PC-3 (cell line): ENCODE measurements at regions of chr21 and their contacts with region 1.

Region 1: GRCh38 chr21:43718872-43719747 is at the start of gene PDXK:
- DNase-seq: peak; percentile 95
- ATAC-seq: peak; percentile 82
- H3K4me3 ChIP-seq: peak within 1 kb of the TSS; percentile 77
- H3K27ac ChIP-seq: peak within 1 kb of the TSS; percentile 71
- H3K4me1 ChIP-seq: peaks cover 30% of the 10 kb centered on the region
- H3K27me3 ChIP-seq: no peaks in the 10 kb centered on the region
- CTCF ChIP-seq: peak; percentile 47; the same call in 1 of the 2 replicates
- total RNA-seq, gene PDXK: 423 and 464 TPM in 2 replicates

Region 2: GRCh38 chr21:43754948-43755781 is 36.1 kb after region 1 on chr21:
- CTCF ChIA-PET with region 1: no interaction called
- POLR2A ChIA-PET with region 1: no interaction called
- intact Hi-C with region 1: no loop called
- DNase-seq: no peak
- ATAC-seq: peak; percentile 18; the same call in 1 of the 2 replicates
- H3K4me3 ChIP-seq: no peak overlapping the region
- H3K27ac ChIP-seq: no peak overlapping the region
- H3K4me1 ChIP-seq: no peaks in the 10 kb centered on the region
- H3K27me3 ChIP-seq: no peaks in the 10 kb centered on the region
- CTCF ChIP-seq: no peak

Region 3: GRCh38 chr21:43767984-43768867 is 49.1 kb after region 1 on chr21:
- CTCF ChIA-PET with region 1: no interaction called
- POLR2A ChIA-PET with region 1: no interaction called
- intact Hi-C with region 1: loop called (anchors 1 kb)
- DNase-seq: peak; percentile 96
- ATAC-seq: peak; percentile 80
- H3K4me3 ChIP-seq: no peak overlapping the region; the same call in 1 of the 2 replicates
- H3K27ac ChIP-seq: peak overlapping the region; percentile 97
- H3K4me1 ChIP-seq: peaks cover 33% of the 10 kb centered on the region
- H3K27me3 ChIP-seq: no peaks in the 10 kb centered on the region
- CTCF ChIP-seq: no peak